ENCODE measurements at regions of chr11 and their contacts with region 1.

Region 1: GRCh38 chr11:2314525-2315394 is 12.9 kb downstream of the TSPAN32 start:
- DNase-seq: peak; percentile 95 to 99 (median 97)
- H3K4me3 ChIP-seq: no peak overlapping the region
- H3K27ac ChIP-seq: peak overlapping the region; percentile 77 to 83
- H3K4me1 ChIP-seq: peaks cover 22% of the 10 kb centered on the region
- H3K27me3 ChIP-seq: no peaks in the 10 kb centered on the region
- CTCF ChIP-seq: no peak
- EP300 ChIP-seq: no peak
- POLR2A ChIP-seq: no peak

Region 2: DNA sequence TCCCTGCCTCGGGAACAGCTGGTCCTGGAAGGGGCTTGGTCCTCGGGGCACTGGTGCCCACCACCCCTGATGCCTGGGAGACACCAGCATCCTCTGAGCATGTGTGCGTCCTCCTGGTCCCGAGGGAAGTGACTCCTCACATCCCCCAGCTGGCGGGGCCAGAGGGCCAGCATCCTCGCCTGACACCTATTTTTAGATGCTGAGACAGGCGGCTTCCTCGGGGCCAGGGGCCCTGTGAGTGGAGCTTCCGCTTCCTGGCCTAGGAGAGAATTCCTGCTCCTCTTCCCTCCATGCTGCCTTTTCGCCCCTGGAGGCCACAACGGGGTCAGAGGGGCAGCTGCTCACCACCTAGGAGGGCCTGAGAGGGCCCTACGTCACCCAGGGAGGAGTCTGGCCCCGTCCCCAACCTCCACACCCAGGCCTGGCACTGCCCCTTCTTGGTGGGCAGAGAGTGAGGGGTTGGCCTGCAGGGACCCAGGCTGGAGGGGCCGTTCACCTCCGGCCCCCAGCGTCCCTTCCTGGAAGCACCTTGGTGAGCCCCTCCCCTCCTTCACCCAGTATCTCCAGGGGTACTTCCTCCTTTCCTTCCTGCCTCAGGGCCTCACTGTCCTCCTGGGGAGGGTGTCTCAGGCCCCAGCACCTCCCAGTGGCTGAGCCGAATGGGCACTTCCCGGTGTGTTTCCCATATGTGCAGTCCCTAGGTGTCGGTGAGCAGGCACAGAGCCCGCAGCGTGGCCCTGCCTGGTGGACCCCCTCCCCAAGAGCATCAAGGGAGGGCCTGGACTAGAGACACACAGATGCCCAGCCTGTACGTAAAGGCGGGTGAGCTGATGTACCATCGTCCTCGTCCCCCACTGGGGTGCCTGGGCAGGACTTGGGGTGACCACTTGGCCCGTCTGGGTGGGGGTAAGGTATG is 68.4 kb after region 1 on chr11:
- intact Hi-C with region 1: loop called in 3 of 4 experiments (anchors 5 kb)
- DNase-seq: peak; percentile 60 to 74 (median 66)
- H3K4me3 ChIP-seq: peak overlapping the region; percentile 3
- H3K27ac ChIP-seq: peak overlapping the region; percentile 62 to 66
- H3K4me1 ChIP-seq: peaks cover 57% of the 10 kb centered on the region
- H3K27me3 ChIP-seq: no peaks in the 10 kb centered on the region
- CTCF ChIP-seq: no peak
- EP300 ChIP-seq: no peak
- POLR2A ChIP-seq: no peak